CD8-positive, alpha-beta T cell (primary cell): ENCODE measurements at regions of chrX and their contacts with region 1.

Region 1: GRCh38 chrX:47497273-47497672 is 14.3 kb upstream of the ZNF41 start:
- DNase-seq: peak in 2 of 9 experiments; percentile 12 to 29
- ATAC-seq: no peak
- H3K4me3 ChIP-seq: no peak overlapping the region
- H3K4me3 Mint-ChIP-seq: no peak overlapping the region
- H3K27ac ChIP-seq: no peak overlapping the region
- H3K27ac Mint-ChIP-seq: no peak overlapping the region
- H3K4me1 ChIP-seq: no peaks in the 10 kb centered on the region
- H3K4me1 Mint-ChIP-seq: peaks cover 3% of the 10 kb centered on the region
- H3K27me3 ChIP-seq: no peaks in the 10 kb centered on the region
- H3K27me3 Mint-ChIP-seq: no peaks in the 10 kb centered on the region
- CTCF ChIP-seq: no peak

Region 2: DNA sequence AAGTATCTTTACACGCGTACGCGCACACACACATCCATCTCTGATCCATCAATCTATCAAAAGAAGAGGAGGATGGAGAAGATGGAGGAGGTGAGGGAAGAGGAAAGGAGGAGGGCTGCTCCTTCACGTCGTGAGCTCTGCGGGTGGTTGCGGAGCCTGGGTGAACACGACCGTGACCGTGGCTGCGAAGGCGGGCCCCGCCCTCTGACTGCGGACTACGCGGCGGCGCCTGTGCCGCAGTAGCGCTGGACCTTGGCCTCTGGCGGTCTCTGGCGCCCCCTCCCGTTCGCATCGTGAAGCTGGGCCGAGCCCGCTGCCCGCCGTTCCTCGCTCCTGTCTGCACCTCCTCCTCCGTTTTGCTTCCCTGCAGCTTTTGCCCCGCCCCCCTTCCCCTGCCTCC is 26.0 kb after region 1 on chrX:
- CTCF ChIA-PET with region 1: interaction called, 21 read pairs
- POLR2A ChIA-PET with region 1: no interaction called
- intact Hi-C with region 1: loop called in 1 of 2 experiments (anchors 1 kb)
- DNase-seq: peak; percentile 53 to 90 (median 78)
- ATAC-seq: peak; percentile 97
- H3K4me3 ChIP-seq: peak overlapping the region; percentile 47 to 49
- H3K4me3 Mint-ChIP-seq: peak overlapping the region; percentile 69
- H3K27ac ChIP-seq: no peak overlapping the region
- H3K27ac Mint-ChIP-seq: no peak overlapping the region
- H3K4me1 ChIP-seq: no peaks in the 10 kb centered on the region
- H3K4me1 Mint-ChIP-seq: peaks cover 5% of the 10 kb centered on the region
- H3K27me3 ChIP-seq: no peaks in the 10 kb centered on the region
- H3K27me3 Mint-ChIP-seq: no peaks in the 10 kb centered on the region
- CTCF ChIP-seq: peak; percentile 72

Region 3: GRCh38 chrX:47644557-47645091 is 147.4 kb after region 1 on chrX:
- CTCF ChIA-PET with region 1: no interaction called
- POLR2A ChIA-PET with region 1: no interaction called
- intact Hi-C with region 1: loop called in 1 of 2 experiments (anchors 5 kb)
- DNase-seq: peak in 1 of 9 experiments; percentile 33
- ATAC-seq: peak; percentile 42
- H3K4me3 ChIP-seq: no peak overlapping the region
- H3K4me3 Mint-ChIP-seq: no peak overlapping the region
- H3K27ac ChIP-seq: no peak overlapping the region
- H3K27ac Mint-ChIP-seq: no peak overlapping the region
- H3K4me1 ChIP-seq: peaks cover 19% of the 10 kb centered on the region
- H3K4me1 Mint-ChIP-seq: peaks cover 48% of the 10 kb centered on the region
- H3K27me3 ChIP-seq: no peaks in the 10 kb centered on the region
- H3K27me3 Mint-ChIP-seq: no peaks in the 10 kb centered on the region
- CTCF ChIP-seq: no peak